ENCODE measurements at regions of chr4 and their contacts with region 1.

Region 1: DNA sequence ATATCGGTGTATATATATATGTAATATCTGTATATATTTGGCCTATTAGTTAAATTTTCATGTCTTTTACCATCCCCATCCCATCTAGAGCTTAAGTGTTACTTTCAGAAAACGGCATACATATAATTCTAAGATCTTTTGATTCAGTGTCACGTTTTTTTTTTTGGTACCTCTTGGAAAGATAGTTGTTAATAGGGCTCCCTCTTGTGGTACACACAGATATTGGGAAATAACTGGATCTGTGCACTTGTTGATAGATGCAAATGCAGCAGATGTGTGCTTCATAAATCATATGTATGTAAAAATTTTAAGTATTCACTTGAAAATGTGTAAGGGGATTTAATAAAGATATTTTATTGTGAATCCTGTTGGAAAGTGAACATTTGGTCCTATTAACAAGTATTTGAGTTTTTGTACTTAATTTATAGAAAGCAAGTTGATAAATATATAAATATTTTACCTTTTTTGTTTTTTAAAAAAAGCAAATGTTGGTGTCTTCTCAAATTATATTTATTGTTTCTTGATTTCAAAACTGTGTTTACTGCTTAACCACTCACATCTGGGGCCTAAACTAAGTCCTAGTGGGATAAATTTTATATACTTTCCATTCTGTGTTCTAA is 74.7 kb downstream of the PAQR3 start:
- DNase-seq: peak; percentile 84
- ATAC-seq: peak; percentile 73
- H3K4me3 ChIP-seq: no peak overlapping the region
- H3K4me3 Mint-ChIP-seq: peak overlapping the region; percentile 8
- H3K27ac ChIP-seq: no peak overlapping the region
- H3K27ac Mint-ChIP-seq: peak overlapping the region; percentile 46
- H3K4me1 ChIP-seq: peaks cover 6 to 7% of the 10 kb centered on the region in 2 donors
- H3K4me1 Mint-ChIP-seq: peaks cover 17% of the 10 kb centered on the region
- H3K27me3 ChIP-seq: no peaks in the 10 kb centered on the region
- H3K27me3 Mint-ChIP-seq: no peaks in the 10 kb centered on the region
- CTCF ChIP-seq: peak; percentile 84

Region 2: GRCh38 chr4:77413766-77414165 is 1450.7 kb before region 1 on chr4:
- CTCF ChIA-PET with region 1: no interaction called
- POLR2A ChIA-PET with region 1: no interaction called
- intact Hi-C with region 1: no loop called
- DNase-seq: no peak
- ATAC-seq: no peak
- H3K4me3 ChIP-seq: no peak overlapping the region
- H3K4me3 Mint-ChIP-seq: no peak overlapping the region
- H3K27ac ChIP-seq: no peak overlapping the region
- H3K27ac Mint-ChIP-seq: no peak overlapping the region
- H3K4me1 ChIP-seq: no peaks in the 10 kb centered on the region
- H3K4me1 Mint-ChIP-seq: no peaks in the 10 kb centered on the region
- H3K27me3 ChIP-seq: no peaks in the 10 kb centered on the region
- H3K27me3 Mint-ChIP-seq: no peaks in the 10 kb centered on the region
- CTCF ChIP-seq: no peak

Region 3: DNA sequence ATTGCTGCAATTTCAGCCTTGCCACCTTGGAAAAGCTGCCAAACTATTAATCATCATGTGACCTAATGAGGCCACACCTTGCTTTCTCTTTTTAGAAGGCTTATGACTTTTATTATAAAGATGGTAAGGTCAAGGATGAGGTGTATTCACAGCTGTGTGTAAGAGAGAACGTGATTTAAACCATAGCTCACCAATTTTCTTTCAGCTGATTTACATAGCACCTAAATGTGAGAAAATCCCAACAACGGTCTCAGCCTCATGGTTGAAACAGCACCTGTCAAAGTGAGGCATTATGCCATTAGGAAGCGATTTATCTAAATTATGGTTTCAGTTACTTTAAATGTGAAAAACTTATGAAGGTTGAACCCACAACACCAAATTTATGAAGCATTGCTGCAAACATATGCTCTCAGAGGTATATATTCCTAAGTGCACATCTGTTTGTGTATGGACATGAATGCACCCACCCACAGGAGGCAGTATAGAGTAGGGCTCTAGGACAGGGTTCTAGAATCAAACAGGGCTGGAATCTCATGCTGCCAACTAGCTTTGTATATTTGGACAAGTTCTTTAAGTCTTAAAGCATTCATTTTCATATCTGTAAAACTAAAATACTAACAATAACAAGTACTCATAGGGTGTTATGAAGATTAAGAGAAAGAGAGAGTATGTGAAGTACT is 272.3 kb before region 1 on chr4:
- CTCF ChIA-PET with region 1: interaction called, 17 read pairs
- POLR2A ChIA-PET with region 1: no interaction called
- intact Hi-C with region 1: no loop called
- DNase-seq: peak; percentile 36
- ATAC-seq: no peak
- H3K4me3 ChIP-seq: no peak overlapping the region
- H3K4me3 Mint-ChIP-seq: no peak overlapping the region
- H3K27ac ChIP-seq: no peak overlapping the region
- H3K27ac Mint-ChIP-seq: no peak overlapping the region
- H3K4me1 ChIP-seq: peaks cover 0 to 11% of the 10 kb centered on the region in 2 donors
- H3K4me1 Mint-ChIP-seq: peaks cover 18% of the 10 kb centered on the region
- H3K27me3 ChIP-seq: no peaks in the 10 kb centered on the region
- H3K27me3 Mint-ChIP-seq: no peaks in the 10 kb centered on the region
- CTCF ChIP-seq: peak; percentile 41

Region 4: GRCh38 chr4:78612398-78613178 is 251.9 kb before region 1 on chr4:
- CTCF ChIA-PET with region 1: interaction called, 164 read pairs
- POLR2A ChIA-PET with region 1: interaction called, 4 read pairs
- intact Hi-C with region 1: loop called (anchors 1 kb)
- DNase-seq: peak; percentile 72
- ATAC-seq: peak; percentile 40
- H3K4me3 ChIP-seq: peak overlapping the region in 1 of 5 experiments; percentile 36
- H3K4me3 Mint-ChIP-seq: peak overlapping the region; percentile 49
- H3K27ac ChIP-seq: peak overlapping the region; percentile 11 to 81
- H3K27ac Mint-ChIP-seq: peak overlapping the region; percentile 86
- H3K4me1 ChIP-seq: peaks cover 55% of the 10 kb centered on the region in 2 donors
- H3K4me1 Mint-ChIP-seq: peaks cover 60% of the 10 kb centered on the region
- H3K27me3 ChIP-seq: no peaks in the 10 kb centered on the region
- H3K27me3 Mint-ChIP-seq: no peaks in the 10 kb centered on the region
- CTCF ChIP-seq: peak; percentile 77

Region 5: GRCh38 chr4:78766650-78767049 is 97.9 kb before region 1 on chr4:
- CTCF ChIA-PET with region 1: interaction called, 10 read pairs
- POLR2A ChIA-PET with region 1: no interaction called
- intact Hi-C with region 1: no loop called
- DNase-seq: peak; percentile 69
- ATAC-seq: peak; percentile 91
- H3K4me3 ChIP-seq: peak overlapping the region in 1 of 5 experiments; percentile 49
- H3K4me3 Mint-ChIP-seq: peak overlapping the region; percentile 77
- H3K27ac ChIP-seq: peak overlapping the region; percentile 26 to 70
- H3K27ac Mint-ChIP-seq: peak overlapping the region; percentile 80
- H3K4me1 ChIP-seq: peaks cover 22 to 26% of the 10 kb centered on the region in 2 donors
- H3K4me1 Mint-ChIP-seq: peaks cover 29% of the 10 kb centered on the region
- H3K27me3 ChIP-seq: no peaks in the 10 kb centered on the region
- H3K27me3 Mint-ChIP-seq: no peaks in the 10 kb centered on the region
- CTCF ChIP-seq: no peak

Region 6: DNA sequence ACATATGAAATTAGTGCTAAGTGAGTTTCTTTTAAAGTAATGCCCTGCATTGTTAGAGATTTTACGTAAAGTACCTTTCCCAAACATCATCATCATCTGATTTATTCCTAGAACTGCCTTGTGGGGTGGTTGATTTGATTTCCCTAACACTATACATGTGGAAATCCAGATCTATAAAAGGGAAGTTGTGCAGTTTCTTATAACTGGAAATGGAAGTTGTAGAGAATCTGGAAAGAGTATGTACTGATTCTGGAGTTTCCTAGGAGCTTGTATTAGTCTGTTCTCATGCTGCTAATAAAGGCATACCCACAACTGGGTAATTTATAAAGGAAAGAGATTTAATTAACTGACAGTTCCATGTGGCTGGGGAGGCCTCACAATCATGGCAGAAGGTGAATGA is 40.5 kb before region 1 on chr4:
- CTCF ChIA-PET with region 1: interaction called, 3 read pairs
- POLR2A ChIA-PET with region 1: no interaction called
- intact Hi-C with region 1: loop called (anchors 5 kb)
- DNase-seq: no peak
- ATAC-seq: no peak
- H3K4me3 ChIP-seq: no peak overlapping the region
- H3K4me3 Mint-ChIP-seq: no peak overlapping the region
- H3K27ac ChIP-seq: peak overlapping the region in 1 of 2 donors; percentile 3
- H3K27ac Mint-ChIP-seq: no peak overlapping the region
- H3K4me1 ChIP-seq: peaks cover 0 to 8% of the 10 kb centered on the region in 2 donors
- H3K4me1 Mint-ChIP-seq: peaks cover 48% of the 10 kb centered on the region
- H3K27me3 ChIP-seq: no peaks in the 10 kb centered on the region
- H3K27me3 Mint-ChIP-seq: no peaks in the 10 kb centered on the region
- CTCF ChIP-seq: no peak

Region 7: GRCh38 chr4:78889955-78890354 is 25.4 kb after region 1 on chr4:
- CTCF ChIA-PET with region 1: no interaction called
- POLR2A ChIA-PET with region 1: no interaction called
- intact Hi-C with region 1: no loop called
- DNase-seq: no peak
- ATAC-seq: no peak
- H3K4me3 ChIP-seq: no peak overlapping the region
- H3K4me3 Mint-ChIP-seq: no peak overlapping the region
- H3K27ac ChIP-seq: no peak overlapping the region
- H3K27ac Mint-ChIP-seq: no peak overlapping the region
- H3K4me1 ChIP-seq: no peaks in the 10 kb centered on the region
- H3K4me1 Mint-ChIP-seq: peaks cover 18% of the 10 kb centered on the region
- H3K27me3 ChIP-seq: no peaks in the 10 kb centered on the region
- H3K27me3 Mint-ChIP-seq: no peaks in the 10 kb centered on the region
- CTCF ChIP-seq: no peak

Region 8: GRCh38 chr4:78951862-78952472 is 87.5 kb after region 1 on chr4:
- CTCF ChIA-PET with region 1: no interaction called
- POLR2A ChIA-PET with region 1: no interaction called
- intact Hi-C with region 1: no loop called
- DNase-seq: peak; percentile 57
- ATAC-seq: peak; percentile 70
- H3K4me3 ChIP-seq: no peak overlapping the region
- H3K4me3 Mint-ChIP-seq: no peak overlapping the region
- H3K27ac ChIP-seq: no peak overlapping the region
- H3K27ac Mint-ChIP-seq: no peak overlapping the region
- H3K4me1 ChIP-seq: no peaks in the 10 kb centered on the region
- H3K4me1 Mint-ChIP-seq: no peaks in the 10 kb centered on the region
- H3K27me3 ChIP-seq: peaks cover 0 to 5% (median 0%) of the 10 kb centered on the region in 4 experiments
- H3K27me3 Mint-ChIP-seq: peaks cover 26% of the 10 kb centered on the region
- CTCF ChIP-seq: peak; percentile 90

Measured in B cell (primary cell).